ENCODE measurements at regions of chr7 and their contacts with region 1.

Region 1: DNA sequence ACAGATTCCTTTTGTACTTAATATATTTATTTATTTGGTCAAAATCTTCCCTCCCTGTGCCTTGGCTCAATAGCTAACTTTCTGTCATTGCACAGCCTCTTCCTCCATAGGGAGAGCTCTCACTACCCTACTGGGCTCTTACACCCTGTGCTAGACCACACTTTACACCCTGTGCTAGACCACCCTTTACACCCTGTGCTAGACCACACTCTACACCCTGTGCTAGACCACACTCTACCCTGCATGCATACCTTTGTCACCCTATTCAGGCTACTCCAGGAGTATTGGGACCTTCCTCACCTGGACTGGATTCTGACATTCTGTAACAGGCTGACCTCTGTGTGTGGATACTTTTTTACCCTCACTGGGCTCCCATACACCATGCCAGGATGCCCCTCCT is 298.5 kb upstream of the TPK1 start:
- H3K4me3 Mint-ChIP-seq: no peak overlapping the region
- H3K27ac Mint-ChIP-seq: no peak overlapping the region
- H3K4me1 Mint-ChIP-seq: no peaks in the 10 kb centered on the region
- H3K27me3 Mint-ChIP-seq: no peaks in the 10 kb centered on the region

Region 2: GRCh38 chr7:145082366-145083161 is 51.8 kb before region 1 on chr7:
- intact Hi-C with region 1: no loop called
- H3K4me3 Mint-ChIP-seq: no peak overlapping the region
- H3K27ac Mint-ChIP-seq: no peak overlapping the region
- H3K4me1 Mint-ChIP-seq: no peaks in the 10 kb centered on the region
- H3K27me3 Mint-ChIP-seq: no peaks in the 10 kb centered on the region

Region 3: DNA sequence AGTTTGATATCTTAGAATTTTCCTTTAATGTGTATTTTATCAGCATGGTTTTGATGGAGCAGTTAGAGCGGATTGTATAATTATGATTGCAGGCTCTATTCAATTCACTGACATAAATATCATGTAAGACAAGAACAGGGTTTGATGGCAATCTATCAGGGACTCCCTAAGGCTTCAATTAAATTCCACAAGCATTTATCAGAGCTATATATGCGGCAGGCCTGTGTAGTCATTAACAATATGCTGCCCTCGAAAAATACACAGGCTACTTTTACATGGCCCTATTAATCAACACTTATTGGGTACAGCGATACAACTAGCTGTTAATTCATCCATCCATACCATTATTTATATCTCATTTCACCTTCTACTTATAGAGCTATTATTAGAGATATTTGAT is 59.6 kb after region 1 on chr7:
- intact Hi-C with region 1: loop called (anchors 10 kb)
- H3K4me3 Mint-ChIP-seq: no peak overlapping the region
- H3K27ac Mint-ChIP-seq: no peak overlapping the region
- H3K4me1 Mint-ChIP-seq: no peaks in the 10 kb centered on the region
- H3K27me3 Mint-ChIP-seq: no peaks in the 10 kb centered on the region

Region 4: GRCh38 chr7:145276118-145276517 is 141.7 kb after region 1 on chr7:
- intact Hi-C with region 1: no loop called
- H3K4me3 Mint-ChIP-seq: no peak overlapping the region
- H3K27ac Mint-ChIP-seq: no peak overlapping the region
- H3K4me1 Mint-ChIP-seq: no peaks in the 10 kb centered on the region
- H3K27me3 Mint-ChIP-seq: no peaks in the 10 kb centered on the region